ENCODE measurements at regions of chr10 and their contacts with region 1.

Region 1: DNA sequence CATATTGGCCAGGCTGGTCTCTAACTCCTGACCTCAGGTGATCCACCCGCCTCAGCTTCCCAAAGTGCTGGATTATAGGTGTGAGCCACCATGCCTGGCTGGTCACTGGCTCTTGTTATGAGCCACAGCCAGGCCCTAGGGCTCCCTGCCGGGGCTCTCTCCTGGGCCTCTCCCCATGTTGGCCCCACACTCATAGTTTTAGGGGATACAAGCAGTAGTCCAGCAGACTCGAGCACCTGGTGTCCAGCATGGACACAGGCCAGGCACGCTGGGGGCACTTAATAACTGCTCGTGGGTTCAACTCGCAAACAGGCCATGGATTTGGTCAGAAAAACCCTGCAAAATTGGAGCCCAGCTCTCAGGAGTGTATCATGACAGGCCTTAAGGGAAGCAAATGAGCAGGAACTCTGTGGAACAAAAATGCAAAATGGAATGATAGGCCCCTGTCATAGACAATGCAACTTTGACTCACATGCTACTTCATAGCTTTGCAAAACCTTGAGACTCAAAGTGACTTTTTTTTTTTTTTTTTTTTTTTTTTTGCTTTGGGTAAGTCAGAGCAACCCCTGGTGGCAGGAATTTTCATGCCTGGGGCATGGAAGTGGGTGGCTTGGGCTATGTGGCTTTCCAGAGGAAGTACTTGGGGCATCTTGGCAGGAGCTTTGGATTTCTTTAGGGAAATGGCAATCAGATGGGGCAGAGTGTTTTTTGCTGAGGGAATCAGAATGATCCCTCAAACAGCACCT is 62.5 kb downstream of the TACC2 start:
- DNase-seq: peak in 2 of 4 experiments; percentile 11 to 18
- ATAC-seq: peak; percentile 58
- H3K4me3 ChIP-seq: no peak overlapping the region
- H3K27ac ChIP-seq: no peak overlapping the region
- H3K4me1 ChIP-seq: no peaks in the 10 kb centered on the region; a peak in 1 of 5 replicates
- H3K27me3 ChIP-seq: peaks cover 0 to 25% of the 10 kb centered on the region in 2 experiments; a peak in 3 of 5 replicates
- CTCF ChIP-seq: peak in 2 of 3 experiments; percentile 46 to 49; a peak in 2 of 6 replicates
- EP300 ChIP-seq: no peak
- POLR2A ChIP-seq: no peak
- RAD21 ChIP-seq: no peak

Region 2: DNA sequence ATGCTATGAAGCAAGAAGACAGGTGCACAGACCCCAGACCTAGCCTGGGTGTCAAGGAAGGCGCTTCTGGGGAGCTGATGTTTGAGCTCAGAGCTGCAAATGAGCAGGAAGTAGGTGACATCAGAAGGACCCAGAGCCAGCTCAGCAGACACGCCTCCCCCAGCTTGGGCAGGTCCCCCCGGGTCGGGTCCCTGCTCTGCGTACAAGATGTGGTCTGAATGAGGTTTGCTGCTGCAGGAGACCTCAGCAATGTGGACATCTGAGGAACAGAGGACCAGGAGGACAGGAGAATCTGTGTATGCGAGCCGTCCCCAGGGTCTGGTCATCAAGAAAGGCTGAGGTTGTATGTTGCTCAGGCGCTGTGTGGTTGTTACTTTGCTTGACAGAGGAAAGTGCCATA is 10.6 kb before region 1 on chr10:
- CTCF ChIA-PET with region 1: no interaction called
- POLR2A ChIA-PET with region 1: no interaction called
- in situ Hi-C with region 1: no loop called
- intact Hi-C with region 1: no loop called
- DNase-seq: no peak
- ATAC-seq: no peak
- H3K4me3 ChIP-seq: no peak overlapping the region
- H3K27ac ChIP-seq: no peak overlapping the region
- H3K4me1 ChIP-seq: no peaks in the 10 kb centered on the region
- H3K27me3 ChIP-seq: peaks cover 15 to 38% of the 10 kb centered on the region in 2 experiments; a peak in 3 of 5 replicates
- CTCF ChIP-seq: no peak
- EP300 ChIP-seq: no peak
- POLR2A ChIP-seq: no peak
- RAD21 ChIP-seq: no peak

Region 3: GRCh38 chr10:122089311-122090017 is 38.0 kb after region 1 on chr10:
- CTCF ChIA-PET with region 1: no interaction called
- POLR2A ChIA-PET with region 1: no interaction called
- in situ Hi-C with region 1: no loop called
- intact Hi-C with region 1: loop called (anchors 1 kb)
- DNase-seq: peak in 1 of 4 experiments; percentile 4
- ATAC-seq: no peak; the same call in 2 of the 3 replicates
- H3K4me3 ChIP-seq: no peak overlapping the region
- H3K27ac ChIP-seq: no peak overlapping the region
- H3K4me1 ChIP-seq: no peaks in the 10 kb centered on the region
- H3K27me3 ChIP-seq: peaks cover 0 to 31% of the 10 kb centered on the region in 2 experiments; a peak in 3 of 5 replicates
- CTCF ChIP-seq: no peak; a peak in 1 of 6 replicates
- EP300 ChIP-seq: no peak
- POLR2A ChIP-seq: no peak
- RAD21 ChIP-seq: peak in 1 of 2 experiments; percentile 23; a peak in 1 of 4 replicates

Region 4: GRCh38 chr10:122112625-122113160 is 61.3 kb after region 1 on chr10:
- CTCF ChIA-PET with region 1: interaction called, 4 read pairs
- POLR2A ChIA-PET with region 1: no interaction called
- in situ Hi-C with region 1: no loop called
- intact Hi-C with region 1: loop called (anchors 10 kb)
- DNase-seq: peak; percentile 22 to 31 (median 29)
- ATAC-seq: peak; percentile 89
- H3K4me3 ChIP-seq: no peak overlapping the region
- H3K27ac ChIP-seq: no peak overlapping the region
- H3K4me1 ChIP-seq: peaks cover 0 to 16% of the 10 kb centered on the region in 2 experiments; a peak in 2 of 5 replicates
- H3K27me3 ChIP-seq: peaks cover 9 to 51% of the 10 kb centered on the region in 2 experiments; a peak in 4 of 5 replicates
- CTCF ChIP-seq: peak in 2 of 3 experiments; percentile 47 to 85; a peak in 4 of 6 replicates
- EP300 ChIP-seq: no peak
- POLR2A ChIP-seq: no peak
- RAD21 ChIP-seq: peak in 1 of 2 experiments; percentile 48; a peak in 2 of 4 replicates

Measured in K562 (cell line).